ENCODE measurements at regions of chr3 and their contacts with region 1.

Region 1: DNA sequence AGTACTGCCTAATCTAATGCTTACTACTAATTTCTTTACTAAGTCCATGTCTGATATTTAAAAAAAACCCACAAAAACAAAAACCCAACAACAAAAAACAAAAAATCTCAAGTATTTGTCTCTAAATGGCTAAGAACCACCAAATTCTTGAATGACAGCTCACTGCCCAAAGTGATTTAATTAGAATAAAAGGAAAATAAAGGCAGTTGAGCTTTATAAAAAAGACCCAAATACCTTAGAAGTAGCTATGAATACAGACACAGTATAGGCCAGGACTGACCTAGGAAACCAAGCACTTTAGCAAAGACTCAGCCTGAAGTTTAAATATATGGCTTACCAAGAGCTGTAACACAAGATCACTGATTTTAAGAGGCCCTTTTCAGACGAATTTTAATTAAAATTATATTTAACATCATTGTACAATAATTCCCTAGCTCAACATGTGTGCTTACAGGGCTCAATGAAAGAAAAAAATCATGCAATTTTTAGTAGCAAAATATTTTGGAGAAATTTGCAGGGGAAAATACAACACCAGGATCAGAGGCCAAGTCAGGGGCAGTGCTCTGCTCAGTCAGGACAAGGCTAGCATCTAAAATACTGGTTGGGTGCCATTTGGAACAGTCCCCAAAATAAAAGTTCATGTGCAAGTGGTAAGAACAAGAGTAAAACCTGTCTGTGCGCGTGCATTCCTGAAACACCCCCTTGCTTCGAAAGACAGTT is 24.8 kb downstream of the UQCC5 start:
- DNase-seq: no peak
- ATAC-seq: no peak; the same call in 1 of the 2 replicates
- H3K4me3 ChIP-seq: no peak overlapping the region
- H3K27ac ChIP-seq: no peak overlapping the region
- H3K4me1 ChIP-seq: peaks cover 4% of the 10 kb centered on the region
- H3K27me3 ChIP-seq: no peaks in the 10 kb centered on the region
- CTCF ChIP-seq: no peak
- POLR2A ChIP-seq: no peak
- RAD21 ChIP-seq: no peak

Region 2: DNA sequence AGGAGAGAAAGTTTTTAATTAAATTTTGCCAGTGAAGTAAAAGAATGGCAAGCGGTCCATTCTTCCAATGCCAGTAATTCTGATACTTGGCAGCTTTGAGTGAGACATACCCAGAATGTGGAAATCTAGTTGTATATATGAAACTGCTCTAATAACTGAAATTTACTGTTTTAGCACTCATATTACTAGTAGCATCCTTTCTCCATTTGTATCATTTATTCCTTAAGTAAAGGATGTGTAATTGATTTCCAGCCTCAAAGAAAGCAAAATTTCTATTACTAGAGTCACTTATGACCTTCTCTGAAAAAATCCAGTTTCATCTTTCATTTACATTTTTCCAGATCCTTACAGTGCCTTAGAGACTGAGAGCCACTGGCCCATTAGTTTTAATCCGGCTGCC is 59.4 kb after region 1 on chr3:
- CTCF ChIA-PET with region 1: no interaction called
- POLR2A ChIA-PET with region 1: no interaction called
- dilution Hi-C with region 1: no loop called
- in situ Hi-C with region 1: no loop called
- intact Hi-C with region 1: loop called (anchors 2 kb)
- DNase-seq: no peak
- ATAC-seq: no peak; the same call in 1 of the 2 replicates
- H3K4me3 ChIP-seq: no peak overlapping the region
- H3K27ac ChIP-seq: no peak overlapping the region
- H3K4me1 ChIP-seq: no peaks in the 10 kb centered on the region; the same call in 1 of the 2 replicates
- H3K27me3 ChIP-seq: no peaks in the 10 kb centered on the region
- CTCF ChIP-seq: no peak
- POLR2A ChIP-seq: no peak
- RAD21 ChIP-seq: no peak

Measured in IMR-90 (cell line).